ENCODE measurements at regions of chrX and their contacts with region 1.

Region 1: GRCh38 chrX:2643880-2644279 is 47.2 kb upstream of the CD99 start:
- DNase-seq: no peak
- H3K4me3 ChIP-seq: no peak overlapping the region
- H3K4me3 Mint-ChIP-seq: no peak overlapping the region
- H3K27ac Mint-ChIP-seq: no peak overlapping the region
- H3K4me1 ChIP-seq: no peaks in the 10 kb centered on the region
- H3K4me1 Mint-ChIP-seq: no peaks in the 10 kb centered on the region
- H3K27me3 ChIP-seq: no peaks in the 10 kb centered on the region
- H3K27me3 Mint-ChIP-seq: no peaks in the 10 kb centered on the region
- CTCF ChIP-seq: no peak

Region 2: DNA sequence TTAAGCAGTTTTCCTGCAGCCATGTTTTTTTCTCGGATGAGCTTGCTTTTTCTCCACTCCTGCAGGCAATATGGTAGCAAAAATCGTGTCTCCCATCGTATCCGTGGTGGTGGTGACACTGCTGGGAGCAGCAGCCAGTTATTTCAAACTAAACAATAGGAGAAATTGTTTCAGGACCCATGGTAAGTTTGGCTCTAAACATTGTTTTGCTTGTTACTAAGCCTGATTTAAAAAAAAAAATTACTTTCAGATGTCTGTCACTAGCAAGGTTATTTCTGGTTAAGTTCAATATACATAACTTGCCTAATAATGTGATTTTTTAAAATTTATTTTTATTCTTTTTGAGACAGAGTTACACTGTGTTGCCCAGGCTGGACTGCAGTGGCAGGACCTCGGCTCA is 167.4 kb after region 1 on chrX:
- CTCF ChIA-PET with region 1: no interaction called
- POLR2A ChIA-PET with region 1: no interaction called
- intact Hi-C with region 1: loop called (anchors 1 kb)
- DNase-seq: no peak
- H3K4me3 ChIP-seq: no peak overlapping the region
- H3K4me3 Mint-ChIP-seq: no peak overlapping the region
- H3K27ac Mint-ChIP-seq: no peak overlapping the region
- H3K4me1 ChIP-seq: no peaks in the 10 kb centered on the region
- H3K4me1 Mint-ChIP-seq: no peaks in the 10 kb centered on the region
- H3K27me3 ChIP-seq: no peaks in the 10 kb centered on the region
- H3K27me3 Mint-ChIP-seq: no peaks in the 10 kb centered on the region
- CTCF ChIP-seq: no peak

Region 3: GRCh38 chrX:2819345-2820135 is 175.7 kb after region 1 on chrX:
- CTCF ChIA-PET with region 1: no interaction called
- POLR2A ChIA-PET with region 1: no interaction called
- intact Hi-C with region 1: loop called (anchors 1 kb)
- DNase-seq: peak in 1 of 2 experiments; percentile 36
- H3K4me3 ChIP-seq: no peak overlapping the region
- H3K4me3 Mint-ChIP-seq: no peak overlapping the region
- H3K27ac Mint-ChIP-seq: no peak overlapping the region
- H3K4me1 ChIP-seq: no peaks in the 10 kb centered on the region
- H3K4me1 Mint-ChIP-seq: peaks cover 7% of the 10 kb centered on the region
- H3K27me3 ChIP-seq: no peaks in the 10 kb centered on the region
- H3K27me3 Mint-ChIP-seq: no peaks in the 10 kb centered on the region
- CTCF ChIP-seq: peak; percentile 30 to 61